BJ (cell line): ENCODE measurements at regions of chr17 and their contacts with region 1.

Region 1: GRCh38 chr17:39621523-39622379 is 5.0 kb upstream of the PPP1R1B start:
- DNase-seq: no peak
- H3K4me3 ChIP-seq: no peak overlapping the region
- H3K27me3 ChIP-seq: peaks cover 22% of the 10 kb centered on the region
- CTCF ChIP-seq: peak; percentile 100

Region 2: DNA sequence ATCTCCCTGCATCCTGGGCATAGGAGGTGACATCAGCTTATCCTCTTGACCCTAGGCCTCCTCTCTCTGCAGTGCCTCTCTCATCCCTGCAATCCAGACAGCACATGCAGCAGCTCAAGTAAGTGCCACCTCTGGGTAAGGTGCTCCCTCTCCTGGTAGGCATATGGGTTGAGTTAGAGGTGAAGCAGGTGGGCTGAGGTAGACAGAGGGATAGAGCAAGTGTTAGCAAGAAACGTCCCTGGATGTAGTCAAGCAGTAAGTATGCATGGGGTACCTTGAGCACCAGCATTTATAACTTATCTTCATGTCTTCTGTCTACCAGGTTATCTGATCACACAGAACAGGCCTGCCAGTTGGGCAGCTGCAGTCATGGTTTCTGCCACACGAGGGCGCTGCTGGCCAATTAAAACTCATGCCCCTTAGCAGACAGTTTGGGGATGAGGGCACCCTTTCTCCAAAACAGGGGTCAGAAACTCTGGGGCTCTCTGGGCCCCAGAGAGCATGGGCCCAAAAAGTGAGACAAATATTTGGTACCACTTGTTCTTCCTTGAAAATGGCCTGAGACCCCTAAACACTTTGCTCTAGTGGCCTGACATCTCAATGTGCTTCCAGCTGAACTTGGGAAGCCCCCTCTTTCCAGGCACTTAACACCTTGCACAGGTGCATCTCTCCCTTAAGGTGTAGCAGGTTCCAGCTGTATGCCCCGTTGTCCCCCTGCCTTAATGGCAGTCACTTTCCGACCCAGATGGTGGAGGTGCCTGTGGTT is 73.9 kb before region 1 on chr17:
- CTCF ChIA-PET with region 1: interaction called, 193 read pairs
- POLR2A ChIA-PET with region 1: no interaction called
- DNase-seq: no peak
- H3K4me3 ChIP-seq: no peak overlapping the region
- H3K27me3 ChIP-seq: no peaks in the 10 kb centered on the region
- CTCF ChIP-seq: peak; percentile 88

Region 3: GRCh38 chr17:39581759-39582460 is 39.8 kb before region 1 on chr17:
- CTCF ChIA-PET with region 1: interaction called, 13 read pairs
- POLR2A ChIA-PET with region 1: no interaction called
- DNase-seq: no peak
- H3K4me3 ChIP-seq: no peak overlapping the region
- H3K27me3 ChIP-seq: peaks cover 4% of the 10 kb centered on the region; the same call in 1 of the 2 replicates
- CTCF ChIP-seq: no peak

Region 4: GRCh38 chr17:39636927-39637736 is 15.4 kb after region 1 on chr17 and contains the start of gene STARD3:
- CTCF ChIA-PET with region 1: interaction called, 157 read pairs
- POLR2A ChIA-PET with region 1: no interaction called
- DNase-seq: no peak
- H3K4me3 ChIP-seq: peak within 1 kb of the TSS; percentile 84
- H3K27me3 ChIP-seq: peaks cover 6% of the 10 kb centered on the region
- CTCF ChIP-seq: peak; percentile 38
- polyA plus RNA-seq, gene STARD3: 51.6 and 93.8 TPM in 2 replicates

Region 5: DNA sequence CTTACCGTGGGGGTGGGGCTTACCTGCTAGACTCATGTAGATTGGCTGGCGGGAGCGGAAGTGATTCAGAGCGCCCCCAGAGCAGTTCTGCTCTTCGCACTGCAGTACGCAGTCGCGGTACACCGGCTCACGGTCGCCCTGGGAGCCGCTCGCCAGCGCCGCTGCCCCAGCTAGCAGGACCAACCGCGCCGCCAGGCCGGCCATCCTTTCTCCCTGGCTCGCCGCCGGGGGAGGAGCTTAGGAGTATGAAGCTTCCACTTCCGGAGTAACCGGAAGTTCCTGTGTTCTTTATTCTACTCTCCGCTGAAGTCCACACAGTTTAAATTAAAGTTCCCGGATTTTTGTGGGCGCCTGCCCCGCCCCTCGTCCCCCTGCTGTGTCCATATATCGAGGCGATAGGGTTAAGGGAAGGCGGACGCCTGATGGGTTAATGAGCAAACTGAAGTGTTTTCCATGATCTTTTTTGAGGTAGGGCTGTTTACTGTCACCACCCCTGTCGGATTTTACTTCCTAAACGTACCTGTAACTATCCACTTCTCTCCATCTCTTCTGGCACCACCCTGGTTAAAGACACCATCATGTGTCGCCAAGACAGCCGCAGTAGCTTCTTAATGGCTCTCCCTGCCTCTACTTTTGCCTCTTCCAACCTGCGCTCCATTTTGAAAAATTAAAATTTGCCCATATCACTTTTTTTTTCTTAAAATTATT is 66.2 kb after region 1 on chr17 and contains the start of gene PGAP3:
- CTCF ChIA-PET with region 1: interaction called, 10 read pairs
- POLR2A ChIA-PET with region 1: no interaction called
- DNase-seq: peak; percentile 67
- H3K4me3 ChIP-seq: peak within 1 kb of the TSS; percentile 72
- H3K27me3 ChIP-seq: no peaks in the 10 kb centered on the region
- CTCF ChIP-seq: no peak
- polyA plus RNA-seq, gene PGAP3: 11.4 and 20.3 TPM in 2 replicates

Region 6: GRCh38 chr17:39754161-39754951 is 132.6 kb after region 1 on chr17:
- CTCF ChIA-PET with region 1: interaction called, 56 read pairs
- POLR2A ChIA-PET with region 1: no interaction called
- DNase-seq: no peak
- H3K4me3 ChIP-seq: peak overlapping the region; percentile 59
- H3K27me3 ChIP-seq: peaks cover 3% of the 10 kb centered on the region
- CTCF ChIP-seq: peak; percentile 65